Adrenal gland (tissue), 19 donors: ENCODE measurements at regions of chr1 and their contacts with region 1.

Region 1: GRCh38 chr1:46724991-46725735 is 6.2 kb upstream of the EFCAB14 start:
- DNase-seq: peak; percentile 66 to 90 (median 78)
- H3K4me3 ChIP-seq: no peak overlapping the region
- H3K27ac ChIP-seq: no peak overlapping the region
- H3K4me1 ChIP-seq: peaks cover 0 to 4% of the 10 kb centered on the region in 2 donors
- H3K27me3 ChIP-seq: peaks cover 8% of the 10 kb centered on the region
- CTCF ChIP-seq: peak; percentile 70 to 92 (median 86)
- POLR2A ChIP-seq: no peak

Region 2: GRCh38 chr1:46539972-46540371 is 185.2 kb before region 1 on chr1:
- intact Hi-C with region 1: loop called in 1 of 2 experiments (anchors 5 kb)
- DNase-seq: peak in 5 of 7 donors; percentile 32 to 73 (median 44)
- H3K4me3 ChIP-seq: no peak overlapping the region
- H3K27ac ChIP-seq: no peak overlapping the region
- H3K4me1 ChIP-seq: no peaks in the 10 kb centered on the region
- H3K27me3 ChIP-seq: peaks cover 25% of the 10 kb centered on the region
- CTCF ChIP-seq: no peak
- POLR2A ChIP-seq: no peak

Region 3: DNA sequence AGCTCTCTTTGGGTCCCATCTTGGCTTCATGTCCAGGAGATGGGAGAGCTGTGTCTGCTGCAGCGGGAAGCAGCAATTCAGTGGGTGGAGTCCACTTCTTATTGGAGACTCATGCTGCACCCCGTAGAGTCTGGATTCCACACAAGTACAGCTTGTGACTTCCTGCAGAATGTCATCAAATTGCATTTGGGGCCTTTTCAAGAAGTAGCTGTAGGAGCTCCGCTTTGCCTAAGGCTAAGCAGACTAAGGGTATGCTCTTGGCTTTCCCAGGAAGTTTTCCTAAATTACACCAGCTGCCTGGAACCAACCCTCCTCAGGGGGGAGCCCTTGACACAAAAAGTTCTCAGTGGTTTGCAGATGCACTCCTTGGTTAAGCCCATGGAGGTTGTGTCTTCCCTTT is 102.8 kb before region 1 on chr1:
- intact Hi-C with region 1: loop called in 1 of 2 experiments (anchors 5 kb)
- DNase-seq: peak in 4 of 7 donors; percentile 48 to 76 (median 57)
- H3K4me3 ChIP-seq: no peak overlapping the region
- H3K27ac ChIP-seq: no peak overlapping the region
- H3K4me1 ChIP-seq: peaks cover 2 to 3% of the 10 kb centered on the region in 2 donors
- H3K27me3 ChIP-seq: no peaks in the 10 kb centered on the region
- CTCF ChIP-seq: peak; percentile 23 to 59 (median 46)
- POLR2A ChIP-seq: no peak